ENCODE measurements at regions of chr11 and their contacts with region 1.

Region 1: GRCh38 chr11:122267602-122268001 is 151.6 kb upstream of the BLID start:
- DNase-seq: no peak
- H3K4me3 ChIP-seq: no peak overlapping the region
- H3K27ac ChIP-seq: no peak overlapping the region
- H3K4me1 ChIP-seq: peaks cover 0 to 3% of the 10 kb centered on the region in 2 donors
- H3K27me3 ChIP-seq: no peaks in the 10 kb centered on the region
- CTCF ChIP-seq: no peak

Region 2: DNA sequence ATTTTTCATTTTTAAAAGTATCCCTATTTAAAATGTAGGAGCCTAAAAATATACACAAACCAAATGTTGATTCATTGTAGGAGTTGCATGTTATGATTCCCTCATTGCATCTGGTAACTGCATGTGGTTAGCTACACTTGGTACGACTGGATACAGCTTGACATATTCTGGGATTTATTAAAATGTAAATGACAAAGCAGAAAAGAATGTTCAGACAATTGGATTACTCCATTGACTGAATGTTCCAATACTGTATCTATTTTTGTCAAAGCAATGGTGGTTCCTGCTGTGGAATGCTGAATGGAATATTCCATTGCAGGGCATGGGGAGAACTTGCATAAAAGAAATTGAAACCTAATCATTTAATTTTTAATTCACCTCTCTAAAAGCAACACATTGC is 182.3 kb before region 1 on chr11:
- intact Hi-C with region 1: no loop called
- DNase-seq: no peak
- H3K4me3 ChIP-seq: no peak overlapping the region
- H3K27ac ChIP-seq: peak overlapping the region; percentile 42 to 58
- H3K4me1 ChIP-seq: peaks cover 10 to 19% of the 10 kb centered on the region in 2 donors
- H3K27me3 ChIP-seq: no peaks in the 10 kb centered on the region
- CTCF ChIP-seq: no peak

Region 3: GRCh38 chr11:122097419-122098001 is 170.1 kb before region 1 on chr11:
- intact Hi-C with region 1: no loop called
- DNase-seq: no peak
- H3K4me3 ChIP-seq: peak overlapping the region; percentile 71 to 77
- H3K27ac ChIP-seq: peak overlapping the region; percentile 91
- H3K4me1 ChIP-seq: peaks cover 0 to 5% of the 10 kb centered on the region in 2 donors
- H3K27me3 ChIP-seq: no peaks in the 10 kb centered on the region
- CTCF ChIP-seq: no peak

Region 4: GRCh38 chr11:122229481-122230384 is 37.9 kb before region 1 on chr11:
- intact Hi-C with region 1: loop called (anchors 5 kb)
- DNase-seq: no peak
- H3K4me3 ChIP-seq: no peak overlapping the region
- H3K27ac ChIP-seq: peak overlapping the region in 1 of 2 donors; percentile 21
- H3K4me1 ChIP-seq: peaks cover 0 to 17% of the 10 kb centered on the region in 2 donors
- H3K27me3 ChIP-seq: no peaks in the 10 kb centered on the region
- CTCF ChIP-seq: no peak

Measured in ascending aorta (tissue), 2 donors.